ENCODE measurements at regions of chr20 and their contacts with region 1.

Region 1: DNA sequence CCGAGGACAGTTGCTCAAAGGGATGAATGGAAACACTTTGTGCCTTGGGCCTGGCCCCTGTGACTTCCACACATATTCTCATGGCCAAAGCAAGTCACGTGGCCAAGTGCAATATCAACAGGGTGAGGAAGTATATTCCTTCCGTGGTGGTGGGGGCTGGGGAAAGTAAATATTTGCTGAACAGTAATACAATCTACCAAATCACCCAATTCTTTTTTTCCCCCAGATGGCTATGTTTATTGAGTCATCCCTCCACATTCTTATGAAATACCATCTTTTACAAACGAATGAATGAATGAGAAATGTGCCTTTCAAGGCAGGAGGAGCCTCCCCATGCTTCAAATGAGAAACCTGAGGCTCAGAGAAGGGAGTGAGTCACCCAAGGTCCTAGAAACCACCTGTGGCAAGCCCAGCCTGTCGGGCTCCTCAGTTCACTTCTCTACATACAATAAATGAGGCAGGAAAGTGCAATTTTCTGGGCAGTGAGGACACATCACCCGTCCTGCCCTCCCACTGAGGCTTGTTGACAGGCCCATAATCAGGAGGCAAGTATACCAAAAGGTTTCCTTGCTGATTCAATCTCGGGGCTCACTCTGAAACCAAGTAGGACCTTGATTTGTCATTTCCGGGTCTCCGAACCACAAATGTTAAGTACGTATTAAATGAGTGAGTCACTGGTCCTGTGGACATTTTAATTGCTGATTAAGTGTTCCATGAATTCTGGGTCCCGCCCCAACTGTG is 25.3 kb upstream of the TOP1 start:
- DNase-seq: peak; percentile 99
- H3K4me3 ChIP-seq: peak overlapping the region; percentile 14 to 43 (median 33)
- H3K27ac ChIP-seq: peak overlapping the region; percentile 99
- H3K4me1 ChIP-seq: peaks cover 45% of the 10 kb centered on the region
- H3K27me3 ChIP-seq: no peaks in the 10 kb centered on the region
- CTCF ChIP-seq: no peak

Region 2: DNA sequence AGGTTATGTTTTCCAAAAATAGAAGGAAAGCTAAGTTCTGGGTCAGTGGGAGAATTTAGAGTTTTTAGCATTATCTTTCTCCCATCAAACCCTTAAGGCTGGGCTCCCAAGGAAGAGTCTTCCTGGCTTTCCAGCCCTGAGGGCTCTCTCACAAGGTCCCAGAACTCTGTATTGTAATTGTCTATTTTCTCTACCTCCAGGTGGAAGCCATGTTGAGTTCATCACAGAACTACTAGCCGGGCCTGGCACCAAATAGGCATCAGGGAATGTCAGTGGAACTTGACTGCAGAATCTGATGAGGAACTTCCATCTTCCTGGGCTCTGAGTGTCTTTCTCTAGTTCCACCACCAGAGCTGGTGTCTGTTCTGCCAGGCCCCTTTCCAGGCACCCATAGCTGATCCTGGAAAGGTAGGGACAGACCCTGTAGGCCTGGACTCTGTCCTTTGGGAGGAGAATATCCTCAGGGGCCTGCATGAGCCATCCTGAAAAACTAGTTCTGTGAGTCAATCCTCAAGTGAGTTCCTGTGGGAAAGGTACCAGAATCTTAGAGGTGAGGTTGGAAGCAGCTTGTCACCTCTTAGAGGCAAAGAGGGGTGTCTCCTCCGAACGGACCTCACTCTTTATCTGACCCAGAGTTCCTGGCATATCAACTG is 14.2 kb after region 1 on chr20:
- CTCF ChIA-PET with region 1: no interaction called
- dilution Hi-C with region 1: no loop called
- in situ Hi-C with region 1: no loop called
- intact Hi-C with region 1: loop called (anchors 1 kb)
- DNase-seq: peak; percentile 79
- H3K4me3 ChIP-seq: no peak overlapping the region
- H3K27ac ChIP-seq: peak overlapping the region; percentile 62
- H3K4me1 ChIP-seq: peaks cover 25% of the 10 kb centered on the region
- H3K27me3 ChIP-seq: no peaks in the 10 kb centered on the region
- CTCF ChIP-seq: no peak